HCT116 (cell line): ENCODE measurements at regions of chr19 and their contacts with region 1.

Region 1: GRCh38 chr19:50368649-50369570 is 3.5 kb upstream of the NAPSA start:
- DNase-seq: peak; percentile 74
- ATAC-seq: peak; percentile 91
- H3K4me3 ChIP-seq: peak overlapping the region; percentile 67 to 74
- H3K27ac ChIP-seq: peak overlapping the region; percentile 67
- H3K4me1 ChIP-seq: peaks cover 3 to 16% of the 10 kb centered on the region in 2 experiments; a peak in 3 of 4 replicates
- H3K27me3 ChIP-seq: no peaks in the 10 kb centered on the region
- CTCF ChIP-seq: peak; percentile 79 to 87 (median 80)
- POLR2A ChIP-seq: peak; percentile 67
- RAD21 ChIP-seq: peak; percentile 92

Region 2: DNA sequence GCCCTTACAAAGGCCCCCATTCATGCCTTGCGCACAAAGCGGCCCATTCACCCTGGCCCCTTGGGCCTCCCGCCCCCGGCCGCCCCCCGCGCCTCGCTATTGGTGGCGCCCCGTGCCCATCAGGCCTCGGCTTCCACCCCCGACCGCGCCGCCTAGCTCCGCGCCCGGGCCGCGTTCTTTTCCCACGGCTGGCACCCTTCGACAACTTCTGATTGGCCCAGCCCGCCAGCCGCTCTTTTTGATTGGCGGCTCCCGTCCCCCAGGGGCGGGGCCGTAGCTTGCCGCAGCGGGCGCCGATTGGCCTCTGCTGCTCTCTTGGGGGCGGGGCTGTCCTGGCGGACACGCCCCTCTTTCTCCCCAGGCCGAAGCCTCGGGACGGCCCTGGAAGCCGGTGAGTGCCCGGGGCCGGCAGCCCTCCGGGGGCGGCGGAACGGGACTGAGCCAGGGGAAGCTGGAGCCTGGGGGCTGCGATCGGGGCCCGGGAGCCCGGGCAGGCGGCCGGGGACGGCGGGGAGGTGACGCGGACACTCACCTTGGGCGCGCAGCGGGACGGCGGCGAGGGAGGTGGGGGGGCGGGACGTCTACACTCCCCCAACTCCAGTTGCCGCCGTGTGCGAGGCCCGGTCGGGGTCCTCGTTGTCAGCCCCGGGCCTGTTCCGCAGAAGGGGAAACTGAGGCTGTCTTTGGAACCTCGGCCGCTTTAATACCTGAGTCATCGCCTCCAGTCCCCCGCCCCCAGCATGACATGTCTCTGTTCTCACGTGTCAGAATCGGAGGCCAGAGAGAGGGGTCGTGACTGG is 165.4 kb before region 1 on chr19 and contains the start of gene MYH14:
- CTCF ChIA-PET with region 1: no interaction called
- POLR2A ChIA-PET with region 1: no interaction called
- RAD21 ChIA-PET with region 1: no interaction called
- intact Hi-C with region 1: no loop called
- DNase-seq: peak; percentile 86
- ATAC-seq: peak; percentile 87
- H3K4me3 ChIP-seq: peak within 1 kb of the TSS; percentile 55 to 73
- H3K27ac ChIP-seq: peak within 1 kb of the TSS; percentile 40; the same call in 1 of the 2 replicates
- H3K4me1 ChIP-seq: peaks cover 25 to 30% of the 10 kb centered on the region in 2 experiments
- H3K27me3 ChIP-seq: no peaks in the 10 kb centered on the region
- CTCF ChIP-seq: no peak
- POLR2A ChIP-seq: no peak
- RAD21 ChIP-seq: no peak
- total RNA-seq, gene MYH14: 60.1 TPM

Region 3: DNA sequence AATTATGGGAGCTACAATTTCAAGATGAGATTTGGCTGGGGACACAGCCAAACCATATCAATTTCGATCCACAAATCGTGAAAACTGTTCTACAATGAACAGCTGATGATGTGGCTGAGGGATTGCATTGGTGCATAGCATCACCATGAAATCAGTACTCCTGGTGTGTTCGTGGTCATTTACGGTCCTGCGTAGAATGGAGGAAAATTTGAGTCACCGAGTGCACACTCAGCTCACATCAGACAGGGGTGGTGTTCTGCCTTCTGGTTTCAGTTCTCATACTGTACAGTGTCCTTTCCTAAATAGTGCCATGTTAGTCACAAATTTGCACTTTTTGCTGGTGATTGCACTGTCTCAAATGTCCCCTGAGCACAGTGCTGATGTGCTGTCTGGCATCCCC is 126.3 kb before region 1 on chr19:
- CTCF ChIA-PET with region 1: no interaction called
- POLR2A ChIA-PET with region 1: no interaction called
- RAD21 ChIA-PET with region 1: no interaction called
- intact Hi-C with region 1: no loop called
- DNase-seq: no peak
- ATAC-seq: no peak
- H3K4me3 ChIP-seq: no peak overlapping the region
- H3K27ac ChIP-seq: no peak overlapping the region
- H3K4me1 ChIP-seq: peaks cover 14 to 33% of the 10 kb centered on the region in 2 experiments
- H3K27me3 ChIP-seq: no peaks in the 10 kb centered on the region
- CTCF ChIP-seq: no peak
- POLR2A ChIP-seq: no peak
- RAD21 ChIP-seq: no peak

Region 4: DNA sequence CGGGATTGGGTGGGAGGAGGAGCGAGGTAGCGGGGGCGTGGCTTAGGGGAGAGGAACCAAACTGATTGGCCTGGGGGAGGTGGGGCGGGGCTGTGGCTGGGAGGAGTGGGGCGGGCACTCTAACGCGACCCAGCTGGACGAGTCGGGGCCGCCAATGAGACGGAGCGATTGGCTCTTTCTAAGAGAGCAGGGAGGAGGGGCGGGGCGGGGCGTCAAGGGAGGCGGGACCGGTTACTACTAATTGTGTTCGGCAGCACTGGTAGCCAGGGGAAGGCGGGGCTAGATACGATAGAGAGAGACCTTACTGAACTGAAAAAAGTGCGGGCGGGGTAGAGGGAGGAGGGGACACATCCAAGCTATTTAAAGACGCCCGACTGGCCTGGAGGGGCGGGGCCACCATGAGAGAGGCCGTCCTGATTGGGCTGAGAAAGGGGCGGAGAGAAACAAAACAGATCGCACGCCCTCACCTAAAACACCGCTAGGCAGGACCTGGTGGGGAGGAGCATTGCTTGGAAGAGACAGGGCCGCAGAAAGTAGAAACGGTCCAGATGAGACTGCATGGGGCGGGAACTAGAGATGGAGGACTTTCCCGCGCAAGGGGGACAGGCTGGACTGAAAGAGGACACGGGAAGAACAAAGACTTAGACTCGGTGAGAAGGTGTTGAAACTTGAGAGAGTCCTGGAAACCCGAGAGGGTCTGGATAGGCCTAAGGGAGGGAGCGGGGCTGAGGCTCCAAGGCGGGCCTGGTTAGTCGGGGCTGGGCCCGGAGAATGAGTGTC is 39.6 kb before region 1 on chr19 and contains the start of gene KCNC3:
- CTCF ChIA-PET with region 1: interaction called, 10 read pairs
- POLR2A ChIA-PET with region 1: no interaction called
- RAD21 ChIA-PET with region 1: no interaction called
- intact Hi-C with region 1: no loop called
- DNase-seq: peak; percentile 99
- ATAC-seq: peak; percentile 75
- H3K4me3 ChIP-seq: peak within 1 kb of the TSS; percentile 62 to 64
- H3K27ac ChIP-seq: peak within 1 kb of the TSS; percentile 81
- H3K4me1 ChIP-seq: peaks cover 33 to 78% of the 10 kb centered on the region in 2 experiments
- H3K27me3 ChIP-seq: no peaks in the 10 kb centered on the region
- CTCF ChIP-seq: no peak
- POLR2A ChIP-seq: peak; percentile 84
- RAD21 ChIP-seq: no peak
- total RNA-seq, gene KCNC3: 6.9 TPM

Region 5: GRCh38 chr19:50461066-50461875 is 92.4 kb after region 1 on chr19:
- CTCF ChIA-PET with region 1: interaction called, 9 read pairs
- POLR2A ChIA-PET with region 1: interaction called, 4 read pairs
- RAD21 ChIA-PET with region 1: interaction called, 3 to 5 read pairs
- intact Hi-C with region 1: loop called (anchors 1 kb)
- DNase-seq: peak; percentile 48
- ATAC-seq: peak; percentile 74
- H3K4me3 ChIP-seq: peak overlapping the region in 1 of 2 experiments; percentile 38; a peak in 2 of 4 replicates
- H3K27ac ChIP-seq: no peak overlapping the region
- H3K4me1 ChIP-seq: peaks cover 13 to 36% of the 10 kb centered on the region in 2 experiments
- H3K27me3 ChIP-seq: no peaks in the 10 kb centered on the region
- CTCF ChIP-seq: peak; percentile 81 to 85 (median 82)
- POLR2A ChIP-seq: no peak
- RAD21 ChIP-seq: peak; percentile 86

Region 6: DNA sequence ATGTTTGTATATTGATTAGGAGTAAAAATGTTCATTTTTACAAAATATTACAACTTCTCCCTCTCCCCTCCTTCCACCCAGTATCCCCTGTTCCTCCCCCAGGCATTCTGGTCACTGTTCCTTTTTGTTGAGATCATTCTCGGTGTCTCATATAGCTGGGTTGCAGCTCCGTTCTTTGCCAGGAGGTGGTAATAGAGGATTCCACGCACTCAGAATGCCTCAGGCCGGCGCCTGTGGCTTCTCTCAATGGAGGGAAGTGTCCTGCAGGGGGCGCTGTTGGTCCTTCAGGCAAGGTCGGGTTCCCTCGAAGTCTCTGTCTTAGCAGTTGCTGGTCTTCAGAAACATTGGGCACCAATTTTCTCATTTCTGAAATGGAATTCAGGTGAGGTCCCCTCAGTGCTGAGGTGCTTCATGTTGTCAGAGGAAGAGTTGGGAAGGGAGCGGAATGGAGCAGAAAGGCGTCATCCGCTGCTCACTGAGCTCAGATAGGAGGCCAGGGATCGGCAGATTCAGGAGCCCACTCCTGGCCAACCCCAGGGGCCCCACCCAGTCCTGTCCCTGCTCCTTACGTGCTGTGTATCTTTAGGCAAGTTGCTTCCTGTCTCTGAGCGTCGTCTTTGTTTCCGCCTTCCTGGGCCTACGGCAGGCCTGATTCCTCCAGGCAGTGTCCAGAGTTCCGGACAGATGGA is 118.1 kb after region 1 on chr19:
- CTCF ChIA-PET with region 1: no interaction called
- POLR2A ChIA-PET with region 1: no interaction called
- RAD21 ChIA-PET with region 1: no interaction called
- intact Hi-C with region 1: no loop called
- DNase-seq: peak; percentile 80
- ATAC-seq: peak; percentile 73
- H3K4me3 ChIP-seq: no peak overlapping the region
- H3K27ac ChIP-seq: no peak overlapping the region
- H3K4me1 ChIP-seq: peaks cover 7 to 8% of the 10 kb centered on the region in 2 experiments
- H3K27me3 ChIP-seq: no peaks in the 10 kb centered on the region
- CTCF ChIP-seq: peak; percentile 74 to 95 (median 77)
- POLR2A ChIP-seq: no peak
- RAD21 ChIP-seq: no peak; the same call in none of the 2 replicates

Region 7: GRCh38 chr19:50657712-50658440 is 289.0 kb after region 1 on chr19:
- CTCF ChIA-PET with region 1: no interaction called
- POLR2A ChIA-PET with region 1: no interaction called
- RAD21 ChIA-PET with region 1: no interaction called
- intact Hi-C with region 1: loop called (anchors 5 kb)
- DNase-seq: peak; percentile 99
- ATAC-seq: peak; percentile 95
- H3K4me3 ChIP-seq: peak overlapping the region; percentile 77 to 81
- H3K27ac ChIP-seq: peak overlapping the region; percentile 81
- H3K4me1 ChIP-seq: peaks cover 0 to 34% of the 10 kb centered on the region in 2 experiments; a peak in 3 of 4 replicates
- H3K27me3 ChIP-seq: no peaks in the 10 kb centered on the region
- CTCF ChIP-seq: no peak
- POLR2A ChIP-seq: peak; percentile 47
- RAD21 ChIP-seq: no peak

Region 8: GRCh38 chr19:50777754-50778303 is 408.9 kb after region 1 on chr19:
- CTCF ChIA-PET with region 1: no interaction called
- POLR2A ChIA-PET with region 1: no interaction called
- RAD21 ChIA-PET with region 1: no interaction called
- intact Hi-C with region 1: loop called (anchors 1 kb)
- DNase-seq: no peak
- ATAC-seq: peak; percentile 67
- H3K4me3 ChIP-seq: peak overlapping the region; percentile 24 to 43
- H3K27ac ChIP-seq: no peak overlapping the region
- H3K4me1 ChIP-seq: peaks cover 6 to 17% of the 10 kb centered on the region in 2 experiments; a peak in 3 of 4 replicates
- H3K27me3 ChIP-seq: peaks cover 14% of the 10 kb centered on the region; the same call in 1 of the 2 replicates
- CTCF ChIP-seq: no peak
- POLR2A ChIP-seq: no peak
- RAD21 ChIP-seq: no peak